Psoas muscle (tissue), 8 donors: ENCODE measurements at regions of chr6 and their contacts with region 1.

Region 1: GRCh38 chr6:34986845-34987246 is 97.8 kb downstream of the ANKS1A start:
- DNase-seq: peak; percentile 64 to 73
- ATAC-seq: peak; percentile 84 to 95 (median 87)
- H3K4me3 ChIP-seq: no peak overlapping the region
- H3K27ac ChIP-seq: no peak overlapping the region
- H3K4me1 ChIP-seq: peaks cover 7% of the 10 kb centered on the region
- H3K27me3 ChIP-seq: no peaks in the 10 kb centered on the region
- CTCF ChIP-seq: peak; percentile 92

Region 2: GRCh38 chr6:34688956-34689355 is 297.9 kb before region 1 on chr6:
- intact Hi-C with region 1: no loop called
- DNase-seq: no peak
- ATAC-seq: peak; percentile 44 to 80 (median 64)
- H3K4me3 ChIP-seq: no peak overlapping the region
- H3K27ac ChIP-seq: peak overlapping the region; percentile 47
- H3K4me1 ChIP-seq: peaks cover 61% of the 10 kb centered on the region
- H3K27me3 ChIP-seq: no peaks in the 10 kb centered on the region
- CTCF ChIP-seq: no peak

Region 3: GRCh38 chr6:35034411-35035191 is 47.8 kb after region 1 on chr6:
- intact Hi-C with region 1: loop called in 1 of 2 experiments (anchors 10 kb)
- DNase-seq: peak; percentile 53 to 70
- ATAC-seq: peak; percentile 62 to 90 (median 75)
- H3K4me3 ChIP-seq: peak overlapping the region; percentile 24
- H3K27ac ChIP-seq: peak overlapping the region; percentile 68
- H3K4me1 ChIP-seq: peaks cover 28% of the 10 kb centered on the region
- H3K27me3 ChIP-seq: no peaks in the 10 kb centered on the region
- CTCF ChIP-seq: no peak

Region 4: GRCh38 chr6:35139908-35140655 is 153.2 kb after region 1 on chr6:
- intact Hi-C with region 1: loop called (anchors 1 kb)
- DNase-seq: peak; percentile 26 to 51
- ATAC-seq: peak in 2 of 4 donors; percentile 44 to 79
- H3K4me3 ChIP-seq: no peak overlapping the region
- H3K27ac ChIP-seq: no peak overlapping the region
- H3K4me1 ChIP-seq: no peaks in the 10 kb centered on the region
- H3K27me3 ChIP-seq: peaks cover 0 to 6% (median 0%) of the 10 kb centered on the region in 3 donors
- CTCF ChIP-seq: peak; percentile 88

Region 5: DNA sequence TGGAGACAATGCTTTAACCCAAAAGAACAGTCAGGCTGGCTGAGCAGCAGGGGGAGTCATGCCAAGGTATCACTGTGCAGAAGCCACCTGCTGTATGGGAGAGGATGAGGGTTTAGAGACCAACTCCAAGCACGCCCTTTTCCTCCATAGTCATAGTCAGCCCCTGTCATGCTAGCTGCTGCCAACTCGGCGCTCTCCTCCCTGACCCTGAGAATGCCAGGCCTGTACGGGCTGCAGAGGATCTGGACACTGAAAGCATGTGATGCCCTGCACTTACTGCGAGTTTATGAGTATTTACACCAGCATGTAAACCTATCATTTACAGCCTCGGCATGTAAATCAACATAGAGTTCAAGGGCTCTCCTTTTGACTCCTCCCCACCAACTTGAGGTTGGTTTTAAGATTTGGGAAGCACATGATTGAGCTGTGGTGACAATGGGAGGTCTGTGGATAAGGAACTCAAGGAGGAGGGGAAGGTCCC is 215.3 kb after region 1 on chr6:
- intact Hi-C with region 1: loop called in 1 of 2 experiments (anchors 5 kb)
- DNase-seq: no peak
- ATAC-seq: no peak
- H3K4me3 ChIP-seq: no peak overlapping the region
- H3K27ac ChIP-seq: no peak overlapping the region
- H3K4me1 ChIP-seq: no peaks in the 10 kb centered on the region
- H3K27me3 ChIP-seq: peaks cover 0 to 11% (median 4%) of the 10 kb centered on the region in 3 donors
- CTCF ChIP-seq: no peak

Region 6: DNA sequence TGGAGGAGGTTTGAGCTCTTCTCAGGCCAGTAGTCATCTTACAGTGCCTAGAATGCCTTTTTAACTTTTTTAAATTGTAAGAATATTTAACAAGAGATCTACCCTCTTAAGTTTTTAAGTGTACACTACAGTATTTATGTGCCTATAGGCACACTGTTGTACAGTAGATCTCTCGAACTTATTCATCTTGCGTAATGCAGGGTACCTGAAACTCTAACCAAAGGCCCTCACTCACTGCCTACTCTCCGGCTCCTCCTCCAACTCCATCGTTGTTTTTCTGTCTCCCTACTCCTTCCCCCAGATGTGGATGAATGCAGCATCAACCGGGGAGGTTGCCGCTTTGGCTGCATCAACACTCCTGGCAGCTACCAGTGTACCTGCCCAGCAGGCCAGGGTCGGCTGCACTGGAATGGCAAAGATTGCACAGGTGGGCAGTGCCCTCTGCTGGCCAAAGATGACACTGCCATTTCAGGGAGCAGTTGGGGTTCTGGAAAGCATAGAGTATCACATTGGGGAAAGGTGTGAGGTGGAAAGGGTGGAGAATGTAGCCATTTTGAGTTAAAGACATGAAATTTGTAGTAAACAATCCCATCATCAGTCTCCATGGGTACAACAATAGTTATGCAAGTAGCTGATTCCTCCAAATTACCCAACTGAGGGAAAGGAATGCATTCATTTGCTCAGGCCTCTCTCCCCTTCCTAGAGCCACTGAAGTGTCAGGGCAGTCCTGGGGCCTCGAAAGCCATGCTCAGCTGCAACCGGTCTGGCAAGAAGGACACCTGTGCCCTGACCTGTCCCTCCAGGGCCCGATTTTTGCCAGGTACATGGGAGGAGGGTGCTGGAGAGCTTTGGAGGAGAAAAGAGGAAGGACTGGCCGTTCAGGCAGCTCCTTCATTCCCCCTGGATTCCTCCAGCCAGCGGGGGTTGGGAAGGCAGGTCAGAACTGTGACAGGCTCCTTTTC is 254.3 kb after region 1 on chr6:
- intact Hi-C with region 1: loop called in 1 of 2 experiments (anchors 5 kb)
- DNase-seq: peak; percentile 65 to 79
- ATAC-seq: peak; percentile 80 to 87 (median 84)
- H3K4me3 ChIP-seq: no peak overlapping the region
- H3K27ac ChIP-seq: no peak overlapping the region
- H3K4me1 ChIP-seq: no peaks in the 10 kb centered on the region
- H3K27me3 ChIP-seq: no peaks in the 10 kb centered on the region
- CTCF ChIP-seq: peak; percentile 93